Lower leg skin (tissue), 4 donors: ENCODE measurements at regions of chr1 and their contacts with region 1.

Region 1: DNA sequence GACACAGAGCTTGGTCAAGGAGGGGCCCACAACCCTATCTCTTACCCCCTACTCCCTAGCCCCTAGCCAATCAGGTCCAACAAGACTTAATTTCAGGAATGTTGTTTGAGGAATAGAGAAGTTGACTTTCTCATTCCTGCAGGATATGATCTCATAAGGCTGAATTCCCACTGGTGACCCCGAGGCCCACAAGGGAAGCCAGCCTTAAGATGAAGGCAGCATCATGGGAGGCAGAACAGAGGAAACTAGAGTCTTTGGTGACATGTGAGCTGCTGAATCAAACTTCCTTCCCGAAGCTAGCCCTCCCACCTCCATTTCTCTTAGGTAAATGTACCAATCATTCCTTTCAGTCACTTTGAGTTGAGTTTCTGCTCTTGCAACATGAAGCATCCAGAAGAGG is 9.1 kb upstream of the PDIK1L start:
- DNase-seq: no peak
- H3K4me3 ChIP-seq: no peak overlapping the region
- CTCF ChIP-seq: no peak
- POLR2A ChIP-seq: no peak

Region 2: DNA sequence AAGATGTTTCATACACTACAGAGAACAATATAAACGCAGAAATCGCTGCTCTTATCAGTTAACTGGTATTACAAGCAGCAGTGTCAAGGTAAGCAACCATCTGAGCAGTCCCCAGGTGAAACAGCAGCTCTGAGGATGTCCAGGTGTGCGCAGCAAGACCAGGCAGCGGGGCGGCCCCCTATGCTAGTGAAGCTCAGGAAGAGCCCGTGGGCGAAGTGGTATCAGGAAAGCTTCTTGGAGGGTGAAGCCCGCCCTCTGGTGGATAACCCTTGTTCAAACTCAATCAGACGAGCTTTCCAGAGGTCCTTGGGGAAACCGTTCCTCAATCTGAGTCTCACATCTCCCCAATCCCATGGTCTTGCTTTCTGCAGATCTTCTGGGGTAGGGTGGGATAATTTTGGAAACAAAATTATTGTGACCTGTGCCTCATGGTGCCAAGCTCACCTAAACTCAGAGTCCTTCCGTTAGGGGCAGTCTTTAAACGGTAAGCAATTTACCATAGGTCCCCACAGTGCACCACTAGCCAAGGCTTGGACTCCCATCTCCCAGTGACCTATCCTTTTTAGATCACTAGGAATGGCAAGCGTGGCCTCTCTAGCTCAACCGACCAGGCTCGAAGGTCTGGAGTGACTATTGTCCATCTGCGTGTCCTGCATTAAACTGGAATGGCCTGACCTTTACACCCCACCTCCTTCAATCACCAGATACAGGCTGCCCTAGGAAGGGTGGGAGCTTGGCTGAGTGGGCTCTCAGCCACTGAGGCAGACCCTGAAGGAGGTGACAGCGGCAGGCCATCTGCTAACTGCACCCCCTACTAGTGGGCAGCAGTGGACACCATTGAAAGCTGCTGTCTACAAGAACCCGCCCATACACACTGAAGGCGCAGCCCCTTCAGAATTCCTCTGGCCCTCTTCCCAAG is 42.8 kb after region 1 on chr1:
- intact Hi-C with region 1: loop called (anchors 2 kb)
- DNase-seq: peak; percentile 80 to 95
- H3K4me3 ChIP-seq: no peak overlapping the region
- CTCF ChIP-seq: peak in 1 of 3 donors; percentile 29
- POLR2A ChIP-seq: no peak